ENCODE measurements at regions of chr16 and their contacts with region 1.

Region 1: GRCh38 chr16:88442727-88443576 is 10.1 kb upstream of the ZFPM1 start:
- DNase-seq: peak; percentile 41 to 85
- H3K4me3 ChIP-seq: no peak overlapping the region
- H3K4me1 ChIP-seq: no peaks in the 10 kb centered on the region
- H3K27me3 ChIP-seq: peaks cover 19% of the 10 kb centered on the region

Region 2: DNA sequence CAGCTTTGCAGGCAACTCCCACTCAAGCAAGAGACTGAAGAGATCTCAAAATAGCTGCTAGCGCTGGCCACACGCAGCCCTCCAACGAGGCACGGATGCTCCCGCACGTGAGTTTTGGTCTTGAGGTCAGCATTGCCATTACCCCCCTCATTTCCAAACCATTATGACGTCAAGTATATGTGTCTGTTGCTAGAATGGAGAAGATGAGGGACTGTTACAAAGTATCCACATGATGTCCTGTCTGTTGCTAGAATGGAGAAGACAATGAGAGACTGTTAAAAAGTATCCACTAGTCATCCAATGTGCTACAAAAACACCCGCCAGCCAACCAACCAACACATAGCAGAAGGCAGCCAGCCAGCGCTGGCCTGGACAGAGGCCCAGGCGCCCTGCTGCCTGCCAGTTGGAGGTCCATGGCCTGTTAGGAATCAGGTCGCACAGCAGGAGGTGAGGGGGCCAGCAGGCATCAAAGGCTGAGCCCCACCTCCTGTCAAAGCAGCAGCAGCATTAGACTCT is 702.0 kb before region 1 on chr16:
- in situ Hi-C with region 1: no loop called
- DNase-seq: no peak
- H3K4me3 ChIP-seq: no peak overlapping the region
- H3K4me1 ChIP-seq: no peaks in the 10 kb centered on the region
- H3K27me3 ChIP-seq: no peaks in the 10 kb centered on the region

Region 3: DNA sequence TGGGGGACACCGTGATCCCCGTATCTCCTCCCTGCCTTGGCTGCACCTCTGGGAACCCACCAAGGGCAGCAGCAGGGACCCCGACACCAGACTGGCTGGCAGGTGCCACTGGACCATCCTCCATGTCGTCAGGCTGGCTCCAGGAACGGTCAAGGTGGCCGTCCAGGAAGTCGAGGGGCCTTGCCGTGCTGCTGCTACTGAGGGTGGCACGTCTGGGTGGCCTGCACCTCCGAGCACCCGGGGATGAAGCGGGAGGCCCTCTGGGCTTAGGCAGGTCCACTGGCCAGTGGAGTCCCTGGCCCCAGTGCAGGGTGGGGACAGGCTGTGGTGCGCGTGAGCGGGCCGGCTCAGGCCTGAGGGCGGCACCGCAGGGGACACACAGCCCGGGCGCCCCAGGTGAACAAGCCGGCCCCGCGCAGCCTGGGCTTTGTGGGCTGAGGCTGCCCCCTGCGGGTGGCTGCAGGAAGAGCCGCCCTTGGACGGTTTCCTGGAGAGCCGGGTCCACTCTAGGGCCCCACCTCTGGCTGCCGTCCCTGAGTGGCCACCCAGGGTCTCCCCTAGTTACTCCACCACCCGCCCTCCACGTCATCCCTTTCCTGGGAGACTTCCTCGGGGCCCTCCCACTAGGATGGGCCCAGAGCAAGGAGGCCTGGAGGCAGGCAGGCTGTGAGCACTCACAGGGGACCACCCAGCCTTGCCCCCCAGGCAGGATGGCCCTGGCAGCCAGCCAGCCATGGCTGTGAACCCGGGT is 84.4 kb after region 1 on chr16:
- in situ Hi-C with region 1: loop called (anchors 5 kb)
- DNase-seq: peak; percentile 10 to 75
- H3K4me3 ChIP-seq: no peak overlapping the region
- H3K4me1 ChIP-seq: no peaks in the 10 kb centered on the region
- H3K27me3 ChIP-seq: no peaks in the 10 kb centered on the region